ENCODE measurements at regions of chr6 and their contacts with region 1.

Region 1: GRCh38 chr6:122869437-122870024 is 80.5 kb downstream of the SMPDL3A start:
- DNase-seq: peak; percentile 55
- ATAC-seq: peak; percentile 95
- H3K4me3 ChIP-seq: no peak overlapping the region
- H3K27ac ChIP-seq: no peak overlapping the region
- H3K4me1 ChIP-seq: no peaks in the 10 kb centered on the region
- H3K27me3 ChIP-seq: no peaks in the 10 kb centered on the region; the same call in 1 of the 2 replicates
- CTCF ChIP-seq: peak; percentile 83

Region 2: GRCh38 chr6:122930252-122931180 is 61.0 kb after region 1 on chr6:
- CTCF ChIA-PET with region 1: no interaction called
- POLR2A ChIA-PET with region 1: no interaction called
- in situ Hi-C with region 1: no loop called
- intact Hi-C with region 1: no loop called
- DNase-seq: no peak
- ATAC-seq: no peak
- H3K4me3 ChIP-seq: no peak overlapping the region
- H3K27ac ChIP-seq: no peak overlapping the region
- H3K4me1 ChIP-seq: no peaks in the 10 kb centered on the region
- H3K27me3 ChIP-seq: no peaks in the 10 kb centered on the region
- CTCF ChIP-seq: no peak

Region 3: GRCh38 chr6:123316733-123317323 is 447.3 kb after region 1 on chr6:
- CTCF ChIA-PET with region 1: interaction called, 5 read pairs
- POLR2A ChIA-PET with region 1: no interaction called
- in situ Hi-C with region 1: no loop called
- intact Hi-C with region 1: loop called (anchors 1 kb)
- DNase-seq: peak; percentile 20
- ATAC-seq: no peak
- H3K4me3 ChIP-seq: no peak overlapping the region
- H3K27ac ChIP-seq: no peak overlapping the region
- H3K4me1 ChIP-seq: no peaks in the 10 kb centered on the region; the same call in 1 of the 2 replicates
- H3K27me3 ChIP-seq: no peaks in the 10 kb centered on the region
- CTCF ChIP-seq: no peak; the same call in 1 of the 2 replicates

Region 4: GRCh38 chr6:123380257-123380656 is 510.7 kb after region 1 on chr6:
- CTCF ChIA-PET with region 1: interaction called, 14 read pairs
- POLR2A ChIA-PET with region 1: no interaction called
- in situ Hi-C with region 1: no loop called
- intact Hi-C with region 1: loop called (anchors 1 kb)
- DNase-seq: peak; percentile 25
- ATAC-seq: peak; percentile 93
- H3K4me3 ChIP-seq: no peak overlapping the region
- H3K27ac ChIP-seq: no peak overlapping the region
- H3K4me1 ChIP-seq: no peaks in the 10 kb centered on the region; the same call in 1 of the 2 replicates
- H3K27me3 ChIP-seq: no peaks in the 10 kb centered on the region
- CTCF ChIP-seq: peak; percentile 75